HCT116 (cell line): ENCODE measurements at regions of chr19 and their contacts with region 1.

Region 1: DNA sequence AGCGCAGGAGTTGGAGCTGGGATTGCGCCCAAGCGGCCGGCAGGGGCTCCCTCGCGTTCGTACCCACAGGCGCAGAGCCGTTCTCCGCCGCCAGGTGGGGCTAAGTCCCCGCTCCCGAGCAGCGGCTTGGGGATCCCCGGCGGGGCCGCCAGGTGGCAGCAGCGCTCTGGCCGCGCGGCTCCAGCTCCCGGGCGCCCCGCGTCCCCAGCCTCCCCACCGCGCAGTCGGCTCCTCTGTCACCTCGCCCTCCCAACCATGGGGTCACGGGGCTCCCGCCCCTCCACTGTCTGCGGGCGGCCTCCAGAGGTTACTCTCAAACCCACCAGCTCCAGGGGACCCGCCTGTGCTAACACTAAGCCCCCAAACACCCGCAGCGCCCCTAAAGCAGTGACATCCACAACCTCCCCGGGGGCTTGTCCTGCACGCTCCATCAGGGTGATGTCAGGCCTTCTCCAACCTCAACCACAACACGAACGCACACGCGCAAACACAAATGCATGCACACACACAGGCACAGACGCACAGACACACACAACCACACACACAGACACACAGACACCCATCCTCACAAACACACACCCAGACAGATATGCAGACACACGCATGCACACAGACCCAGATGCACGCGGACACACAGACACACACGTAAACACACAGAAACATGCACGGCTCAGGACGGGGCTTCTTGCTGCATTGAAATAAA is 18.4 kb upstream of the KCTD15 start:
- DNase-seq: no peak
- ATAC-seq: peak; percentile 93
- H3K4me3 ChIP-seq: no peak overlapping the region
- H3K27ac ChIP-seq: no peak overlapping the region
- H3K4me1 ChIP-seq: peaks cover 0 to 4% of the 10 kb centered on the region in 2 experiments; a peak in 1 of 4 replicates
- H3K27me3 ChIP-seq: no peaks in the 10 kb centered on the region
- CTCF ChIP-seq: peak; percentile 100
- POLR2A ChIP-seq: no peak
- RAD21 ChIP-seq: peak; percentile 99

Region 2: DNA sequence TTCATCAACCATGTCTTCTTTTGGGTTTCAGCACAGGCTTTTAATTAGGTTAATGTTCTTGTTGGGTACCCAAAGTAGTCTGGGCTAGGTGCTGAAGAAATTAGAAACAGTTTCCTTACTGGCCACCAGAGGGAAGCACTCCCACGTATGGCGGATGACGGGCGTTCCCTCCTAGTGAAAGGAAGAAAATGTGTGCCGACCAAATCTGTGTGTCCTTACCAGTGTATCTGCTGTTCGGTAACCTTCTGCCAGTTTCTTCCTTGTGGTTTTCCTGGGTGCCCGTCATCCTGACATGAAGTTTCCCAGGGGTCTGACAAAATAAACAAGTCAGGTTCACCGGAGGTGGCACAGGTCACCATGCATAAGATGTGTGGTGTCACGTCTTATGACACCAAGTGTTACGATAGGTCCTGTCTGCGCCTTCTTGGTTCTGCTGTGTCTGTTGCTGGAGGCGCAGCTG is 652.3 kb before region 1 on chr19:
- CTCF ChIA-PET with region 1: no interaction called
- POLR2A ChIA-PET with region 1: no interaction called
- RAD21 ChIA-PET with region 1: no interaction called
- intact Hi-C with region 1: loop called (anchors 10 kb)
- DNase-seq: peak; percentile 28
- ATAC-seq: peak; percentile 93
- H3K4me3 ChIP-seq: no peak overlapping the region
- H3K27ac ChIP-seq: no peak overlapping the region
- H3K4me1 ChIP-seq: peaks cover 0 to 4% of the 10 kb centered on the region in 2 experiments; a peak in 2 of 4 replicates
- H3K27me3 ChIP-seq: no peaks in the 10 kb centered on the region
- CTCF ChIP-seq: peak; percentile 60 to 81 (median 80); a peak in 5 of 6 replicates
- POLR2A ChIP-seq: no peak
- RAD21 ChIP-seq: peak; percentile 76

Region 3: GRCh38 chr19:33795370-33796163 is 17.3 kb after region 1 on chr19:
- CTCF ChIA-PET with region 1: interaction called, 14 read pairs
- POLR2A ChIA-PET with region 1: no interaction called
- RAD21 ChIA-PET with region 1: interaction called in 1 of 2 experiments, 3 read pairs
- intact Hi-C with region 1: no loop called
- DNase-seq: no peak
- ATAC-seq: peak; percentile 77
- H3K4me3 ChIP-seq: peak overlapping the region; percentile 59 to 65
- H3K27ac ChIP-seq: peak overlapping the region; percentile 83
- H3K4me1 ChIP-seq: peaks cover 7 to 15% of the 10 kb centered on the region in 2 experiments; a peak in 3 of 4 replicates
- H3K27me3 ChIP-seq: no peaks in the 10 kb centered on the region
- CTCF ChIP-seq: peak; percentile 61 to 75 (median 74); a peak in 5 of 6 replicates
- POLR2A ChIP-seq: no peak
- RAD21 ChIP-seq: peak; percentile 44; the same call in 1 of the 2 replicates

Region 4: GRCh38 chr19:34096020-34096915 is 318.0 kb after region 1 on chr19:
- CTCF ChIA-PET with region 1: interaction called, 158 read pairs
- POLR2A ChIA-PET with region 1: interaction called, 12 read pairs
- RAD21 ChIA-PET with region 1: interaction called, 15 to 31 read pairs
- intact Hi-C with region 1: loop called (anchors 1 kb)
- DNase-seq: peak; percentile 66
- ATAC-seq: peak; percentile 89
- H3K4me3 ChIP-seq: 0 out of 4 replicates have a peak overlapping the region, but pooled peaks of 1 of the 2 experiments have one; percentile 6
- H3K27ac ChIP-seq: no peak overlapping the region
- H3K4me1 ChIP-seq: 0 out of 4 replicates have a peak, but pooled peaks cover 0 to 5% of the 10 kb centered on the region in 2 experiments
- H3K27me3 ChIP-seq: no peaks in the 10 kb centered on the region
- CTCF ChIP-seq: peak; percentile 57 to 98 (median 81)
- POLR2A ChIP-seq: no peak
- RAD21 ChIP-seq: peak; percentile 87

Region 5: GRCh38 chr19:34220472-34221063 is 442.3 kb after region 1 on chr19:
- CTCF ChIA-PET with region 1: interaction called, 5 read pairs
- POLR2A ChIA-PET with region 1: no interaction called
- RAD21 ChIA-PET with region 1: no interaction called
- intact Hi-C with region 1: loop called (anchors 1 kb)
- DNase-seq: peak; percentile 64
- ATAC-seq: peak; percentile 81
- H3K4me3 ChIP-seq: no peak overlapping the region
- H3K27ac ChIP-seq: no peak overlapping the region
- H3K4me1 ChIP-seq: peaks cover 12 to 16% of the 10 kb centered on the region in 2 experiments; a peak in 3 of 4 replicates
- H3K27me3 ChIP-seq: no peaks in the 10 kb centered on the region
- CTCF ChIP-seq: peak; percentile 55 to 90 (median 79); a peak in 5 of 6 replicates
- POLR2A ChIP-seq: no peak
- RAD21 ChIP-seq: peak; percentile 51